ENCODE measurements at regions of chr5 and their contacts with region 1.

Region 1: GRCh38 chr5:34608859-34609648 is 47.1 kb upstream of the RAI14 start:
- DNase-seq: peak; percentile 82
- H3K4me3 ChIP-seq: no peak overlapping the region
- H3K27ac ChIP-seq: peak overlapping the region; percentile 59
- H3K4me1 ChIP-seq: peaks cover 33% of the 10 kb centered on the region
- H3K27me3 ChIP-seq: no peaks in the 10 kb centered on the region
- CTCF ChIP-seq: no peak

Region 2: GRCh38 chr5:34587355-34588241 is 21.5 kb before region 1 on chr5:
- CTCF ChIA-PET with region 1: interaction called, 6 read pairs
- dilution Hi-C with region 1: no loop called
- in situ Hi-C with region 1: no loop called
- intact Hi-C with region 1: loop called (anchors 2 kb)
- DNase-seq: peak; percentile 58
- H3K4me3 ChIP-seq: no peak overlapping the region
- H3K27ac ChIP-seq: peak overlapping the region; percentile 90
- H3K4me1 ChIP-seq: peaks cover 35% of the 10 kb centered on the region
- H3K27me3 ChIP-seq: no peaks in the 10 kb centered on the region
- CTCF ChIP-seq: no peak

Region 3: GRCh38 chr5:34598177-34598794 is 10.8 kb before region 1 on chr5:
- CTCF ChIA-PET with region 1: no interaction called
- dilution Hi-C with region 1: no loop called
- in situ Hi-C with region 1: no loop called
- intact Hi-C with region 1: loop called (anchors 1 kb)
- DNase-seq: peak; percentile 93
- H3K4me3 ChIP-seq: no peak overlapping the region
- H3K27ac ChIP-seq: peak overlapping the region; percentile 69
- H3K4me1 ChIP-seq: peaks cover 29% of the 10 kb centered on the region
- H3K27me3 ChIP-seq: no peaks in the 10 kb centered on the region
- CTCF ChIP-seq: no peak

Region 4: GRCh38 chr5:34826347-34826746 is 217.3 kb after region 1 on chr5:
- CTCF ChIA-PET with region 1: no interaction called
- dilution Hi-C with region 1: no loop called
- in situ Hi-C with region 1: no loop called
- intact Hi-C with region 1: no loop called
- DNase-seq: no peak
- H3K4me3 ChIP-seq: no peak overlapping the region
- H3K27ac ChIP-seq: no peak overlapping the region
- H3K4me1 ChIP-seq: no peaks in the 10 kb centered on the region
- H3K27me3 ChIP-seq: no peaks in the 10 kb centered on the region
- CTCF ChIP-seq: no peak

Measured in mammary epithelial cell (primary cell).